CD8-positive, alpha-beta memory T cell (primary cell): ENCODE measurements at regions of chr1 and their contacts with region 1.

Region 1: DNA sequence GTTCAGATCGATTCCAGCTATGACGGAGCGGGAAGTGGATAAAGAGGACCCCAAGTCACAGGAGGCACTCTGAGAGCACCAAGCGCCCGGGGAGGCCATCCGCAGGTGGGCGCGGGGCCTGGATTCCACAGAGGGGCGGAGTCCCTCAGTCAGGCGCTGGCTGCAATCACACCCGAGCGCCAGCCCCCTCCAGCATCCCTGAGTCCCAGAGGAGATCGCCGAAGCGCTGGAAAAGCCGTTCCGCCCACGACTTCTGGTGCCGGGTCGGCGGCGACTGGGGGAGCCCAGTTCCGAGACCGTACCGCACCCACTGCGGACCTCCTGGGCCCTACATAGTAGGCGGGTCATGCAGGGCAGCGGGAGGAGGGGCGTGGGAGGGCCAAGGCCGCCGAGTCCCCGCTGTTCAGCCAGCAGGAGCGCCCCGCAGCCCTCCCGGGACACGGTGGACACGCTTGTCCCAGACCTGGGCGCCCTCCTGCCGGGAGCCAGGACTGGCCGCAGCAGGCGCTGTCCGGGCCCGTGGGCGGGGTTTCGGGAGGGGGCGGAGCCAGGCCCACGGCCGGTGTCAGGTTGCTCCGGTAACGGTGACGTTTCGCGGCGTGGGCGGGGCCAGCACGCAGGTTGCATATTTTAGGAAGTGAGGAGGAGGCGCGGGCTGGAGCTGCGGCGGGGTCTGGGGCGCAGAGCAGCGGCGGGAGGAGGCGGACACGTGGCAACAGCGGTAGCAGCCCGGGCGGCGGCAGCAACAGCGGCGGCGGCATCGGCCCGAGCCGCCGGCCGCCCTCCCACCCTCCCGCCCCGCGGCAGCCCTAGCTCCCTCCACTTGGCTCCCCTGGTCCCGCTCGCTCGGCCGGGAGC is at the start of gene ATP1A1:
- DNase-seq: peak; percentile 96 to 98 (median 97)
- H3K4me3 ChIP-seq: peak within 1 kb of the TSS; percentile 70
- H3K4me3 Mint-ChIP-seq: peak within 1 kb of the TSS; percentile 89 to 98 (median 97)
- H3K27ac ChIP-seq: peak within 1 kb of the TSS; percentile 79
- H3K27ac Mint-ChIP-seq: peak within 1 kb of the TSS; percentile 96 to 99 (median 97)
- H3K4me1 ChIP-seq: peaks cover 46% of the 10 kb centered on the region
- H3K4me1 Mint-ChIP-seq: peaks cover 43 to 54% (median 50%) of the 10 kb centered on the region in 3 donors
- H3K27me3 ChIP-seq: no peaks in the 10 kb centered on the region
- H3K27me3 Mint-ChIP-seq: peaks cover 0 to 2% of the 10 kb centered on the region in 2 donors
- total RNA-seq, gene ATP1A1: 259 to 263 TPM

Region 2: DNA sequence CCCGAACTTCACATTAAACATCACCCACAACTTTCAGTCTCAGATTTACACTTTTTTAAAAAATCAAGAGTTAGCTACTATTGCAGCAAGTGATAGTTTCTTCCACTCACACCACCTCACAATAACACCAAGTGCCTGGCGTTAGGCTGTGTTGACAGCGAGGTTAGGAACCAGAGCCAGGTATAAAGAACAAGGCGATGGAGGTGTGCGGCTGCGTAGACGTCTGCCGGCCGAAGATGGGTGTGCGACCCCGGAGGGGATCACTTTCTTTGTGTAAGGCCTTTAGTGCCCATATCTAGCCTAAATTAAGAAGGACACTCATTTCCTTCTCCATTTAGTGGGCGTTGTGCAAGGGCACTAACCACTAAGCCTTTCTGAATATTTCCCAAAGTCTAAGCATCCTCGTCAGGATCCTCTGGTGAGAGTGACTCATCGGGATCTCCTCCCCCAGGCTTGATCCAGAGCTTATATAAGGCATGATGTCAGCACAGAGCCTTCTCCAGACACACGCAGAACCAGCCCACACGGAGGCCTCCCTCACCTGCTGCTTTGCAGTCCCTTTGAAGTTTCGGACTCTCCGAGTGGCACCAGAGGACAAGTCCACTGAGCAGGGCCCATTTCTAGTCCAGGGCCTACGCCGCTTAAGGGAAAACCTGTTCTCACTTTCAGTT is 543.7 kb before region 1 on chr1:
- CTCF ChIA-PET with region 1: no interaction called
- POLR2A ChIA-PET with region 1: no interaction called
- DNase-seq: no peak
- H3K4me3 ChIP-seq: no peak overlapping the region
- H3K4me3 Mint-ChIP-seq: peak overlapping the region; percentile 31 to 70 (median 65)
- H3K27ac ChIP-seq: no peak overlapping the region
- H3K27ac Mint-ChIP-seq: peak overlapping the region in 3 of 8 donors; percentile 43 to 62 (median 55)
- H3K4me1 ChIP-seq: no peaks in the 10 kb centered on the region
- H3K4me1 Mint-ChIP-seq: peaks cover 2 to 9% (median 5%) of the 10 kb centered on the region in 3 donors
- H3K27me3 ChIP-seq: no peaks in the 10 kb centered on the region
- H3K27me3 Mint-ChIP-seq: peaks cover 30 to 83% of the 10 kb centered on the region in 2 donors

Region 3: DNA sequence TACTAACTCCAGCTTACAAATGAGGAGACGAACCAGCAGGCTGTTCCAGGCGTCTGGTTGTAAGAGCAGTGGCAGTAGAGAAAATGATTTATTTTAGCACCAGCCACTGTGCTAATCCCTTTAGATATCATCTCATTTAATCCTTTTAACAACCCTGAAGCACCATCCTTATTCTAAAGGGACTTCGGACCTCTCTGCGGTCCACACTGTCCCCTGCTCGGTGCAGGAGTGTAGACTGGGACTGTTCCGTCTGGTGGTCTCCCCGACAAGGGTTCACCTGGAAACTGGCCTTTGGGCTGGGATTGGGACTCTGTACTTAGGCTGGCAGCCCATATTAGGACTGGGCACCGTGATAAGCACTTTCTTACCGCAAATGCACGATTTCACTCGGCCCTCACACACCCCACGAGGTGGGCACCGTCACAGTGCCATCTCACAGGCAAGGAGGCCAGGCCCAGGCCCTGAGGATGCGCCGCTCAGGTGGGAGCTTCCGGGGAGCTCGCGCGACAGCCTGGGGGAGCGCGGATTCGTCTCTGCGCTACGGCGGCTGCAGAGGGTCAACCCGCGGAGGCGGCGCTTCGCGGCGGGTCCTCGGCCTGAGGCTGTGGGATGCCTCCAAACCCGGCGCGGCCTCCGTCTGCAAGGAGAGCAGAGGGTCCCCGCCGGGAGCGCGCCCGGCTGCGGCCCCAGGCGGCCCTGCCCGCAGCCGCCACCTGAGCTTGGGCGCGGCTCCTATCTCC is 45.4 kb after region 1 on chr1:
- CTCF ChIA-PET with region 1: interaction called, 11 read pairs
- POLR2A ChIA-PET with region 1: interaction called, 7 read pairs
- DNase-seq: peak; percentile 79 to 91 (median 86)
- H3K4me3 ChIP-seq: peak overlapping the region; percentile 98
- H3K4me3 Mint-ChIP-seq: peak overlapping the region; percentile 78 to 96 (median 91)
- H3K27ac ChIP-seq: peak overlapping the region; percentile 85
- H3K27ac Mint-ChIP-seq: peak overlapping the region; percentile 88 to 98 (median 96)
- H3K4me1 ChIP-seq: peaks cover 25% of the 10 kb centered on the region
- H3K4me1 Mint-ChIP-seq: peaks cover 25 to 43% (median 42%) of the 10 kb centered on the region in 3 donors
- H3K27me3 ChIP-seq: no peaks in the 10 kb centered on the region
- H3K27me3 Mint-ChIP-seq: no peaks in the 10 kb centered on the region